ENCODE measurements at regions of chr5 and their contacts with region 1.

Region 1: GRCh38 chr5:150350524-150351344 is 6.8 kb upstream of the TCOF1 start:
- DNase-seq: peak; percentile 66 to 82
- H3K4me3 ChIP-seq: no peak overlapping the region
- H3K27ac ChIP-seq: no peak overlapping the region
- H3K4me1 ChIP-seq: peaks cover 6% of the 10 kb centered on the region
- H3K27me3 ChIP-seq: no peaks in the 10 kb centered on the region
- CTCF ChIP-seq: peak; percentile 90

Region 2: DNA sequence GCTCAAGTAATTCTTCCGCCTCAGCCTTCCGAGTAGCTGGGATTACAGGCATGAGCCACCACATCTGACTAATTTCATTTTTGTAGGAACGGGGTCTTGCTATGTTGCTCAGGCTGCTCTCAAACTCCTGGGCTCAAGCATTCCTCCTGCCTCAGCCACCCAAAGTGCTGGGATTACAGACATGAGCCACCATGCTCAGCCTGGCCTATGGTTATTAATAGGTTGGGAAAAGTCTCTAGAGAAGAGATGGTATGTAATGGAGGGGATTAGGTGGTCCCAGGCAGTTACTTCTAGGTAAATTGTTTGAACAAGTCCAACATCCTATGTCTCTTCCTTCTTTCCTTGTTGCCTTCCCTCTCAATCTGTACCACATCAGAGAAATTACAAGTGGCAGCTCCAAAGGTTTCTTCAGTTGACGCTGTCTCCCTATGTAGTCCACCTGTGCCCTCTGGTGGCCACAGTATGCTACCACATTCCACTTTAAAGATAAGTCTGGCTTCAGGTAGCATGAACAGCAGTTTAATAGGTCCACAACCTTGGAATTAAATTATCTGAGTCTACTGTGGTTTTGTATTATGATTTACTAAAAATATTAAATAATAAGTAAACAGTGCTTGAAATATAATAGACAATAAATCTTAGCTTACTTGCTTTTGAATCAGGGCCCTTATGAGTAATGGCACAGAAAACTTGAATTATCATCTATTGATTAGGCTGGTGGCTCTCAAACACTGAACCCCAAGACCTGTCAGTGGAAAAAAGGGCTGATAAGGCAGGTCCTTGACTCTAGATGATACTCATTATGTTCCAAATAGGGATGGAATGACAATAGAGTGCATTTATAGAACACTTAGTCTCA is 360.0 kb before region 1 on chr5:
- CTCF ChIA-PET with region 1: no interaction called
- POLR2A ChIA-PET with region 1: no interaction called
- intact Hi-C with region 1: loop called (anchors 5 kb)
- DNase-seq: peak; percentile 62 to 70
- H3K4me3 ChIP-seq: no peak overlapping the region
- H3K27ac ChIP-seq: no peak overlapping the region
- H3K4me1 ChIP-seq: peaks cover 15% of the 10 kb centered on the region
- H3K27me3 ChIP-seq: no peaks in the 10 kb centered on the region
- CTCF ChIP-seq: peak; percentile 97

Region 3: GRCh38 chr5:150161242-150162141 is 189.2 kb before region 1 on chr5:
- CTCF ChIA-PET with region 1: no interaction called
- POLR2A ChIA-PET with region 1: no interaction called
- intact Hi-C with region 1: loop called (anchors 1 kb)
- DNase-seq: peak; percentile 51 to 91
- H3K4me3 ChIP-seq: peak overlapping the region; percentile 18; the same call in 1 of the 2 replicates
- H3K27ac ChIP-seq: no peak overlapping the region
- H3K4me1 ChIP-seq: no peaks in the 10 kb centered on the region; the same call in 1 of the 2 replicates
- H3K27me3 ChIP-seq: no peaks in the 10 kb centered on the region
- CTCF ChIP-seq: peak; percentile 96

Region 4: DNA sequence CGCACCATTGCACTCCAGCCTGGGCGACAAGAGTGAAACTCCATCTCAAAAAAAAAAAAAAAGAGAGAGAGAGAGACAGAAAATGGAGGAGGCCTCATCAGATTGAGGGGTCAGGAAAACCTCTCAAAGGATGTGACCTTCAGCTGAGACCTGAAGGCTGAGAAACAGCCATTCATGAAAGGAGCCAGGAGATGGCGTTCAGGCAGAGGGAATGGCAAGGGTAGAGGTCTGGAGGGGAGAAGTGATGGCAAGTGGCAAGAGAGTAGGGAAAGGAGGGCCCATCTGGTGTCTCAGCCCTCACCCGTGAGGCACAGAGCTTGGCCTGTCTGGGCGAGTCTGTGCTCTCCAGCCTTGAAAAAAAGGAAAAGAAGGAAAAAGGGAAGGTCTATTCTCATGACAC is 78.2 kb before region 1 on chr5:
- CTCF ChIA-PET with region 1: interaction called, 5 read pairs
- POLR2A ChIA-PET with region 1: no interaction called
- intact Hi-C with region 1: loop called (anchors 1 kb)
- DNase-seq: peak; percentile 34 to 38
- H3K4me3 ChIP-seq: no peak overlapping the region
- H3K27ac ChIP-seq: no peak overlapping the region
- H3K4me1 ChIP-seq: no peaks in the 10 kb centered on the region
- H3K27me3 ChIP-seq: no peaks in the 10 kb centered on the region
- CTCF ChIP-seq: peak; percentile 46

Region 5: GRCh38 chr5:150320048-150320555 is 30.6 kb before region 1 on chr5:
- CTCF ChIA-PET with region 1: no interaction called
- POLR2A ChIA-PET with region 1: no interaction called
- intact Hi-C with region 1: loop called (anchors 2 kb)
- DNase-seq: peak; percentile 89 to 99
- H3K4me3 ChIP-seq: no peak overlapping the region
- H3K27ac ChIP-seq: peak overlapping the region; percentile 81
- H3K4me1 ChIP-seq: peaks cover 70% of the 10 kb centered on the region
- H3K27me3 ChIP-seq: no peaks in the 10 kb centered on the region
- CTCF ChIP-seq: no peak

Region 6: DNA sequence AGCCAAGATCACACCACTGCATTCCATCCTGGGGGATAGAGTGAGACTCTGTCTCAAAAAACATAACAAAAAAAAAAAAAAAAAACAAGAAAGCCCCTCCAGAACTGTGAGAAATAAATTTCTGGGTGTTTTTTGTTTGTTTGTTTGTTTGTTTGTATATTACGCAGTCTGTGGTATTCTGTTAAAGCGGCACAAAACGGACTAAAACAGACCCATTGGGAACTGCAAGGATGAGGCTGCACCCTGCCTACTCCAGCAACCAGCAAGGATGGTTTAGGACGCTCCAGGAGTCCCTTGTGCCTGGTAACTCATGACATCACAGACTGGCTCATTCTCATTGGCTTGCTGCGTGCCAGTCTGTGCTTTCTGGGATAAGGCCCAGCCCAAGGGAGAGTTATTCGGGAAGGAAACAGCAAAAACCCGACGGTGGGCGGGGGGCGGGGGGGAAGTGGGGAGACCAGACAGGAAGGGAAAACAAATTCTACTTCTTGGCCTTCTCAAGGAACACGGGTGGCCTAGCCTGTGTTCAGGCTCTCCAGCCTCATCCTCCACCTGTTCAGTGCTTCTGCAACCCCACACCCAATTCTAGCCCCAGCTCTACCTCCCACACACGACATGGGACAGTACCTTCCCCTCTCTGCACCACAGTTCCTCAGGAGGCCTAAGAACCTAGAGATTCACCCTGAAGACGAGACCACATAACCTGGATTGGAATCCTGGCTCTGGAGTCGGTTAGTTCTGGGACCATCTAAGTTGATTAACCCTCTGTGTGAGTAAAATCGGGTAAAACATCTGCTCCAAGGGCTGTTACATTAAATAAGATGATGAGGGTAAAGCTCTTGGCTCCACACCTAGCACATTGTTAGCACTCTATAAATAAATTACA is 59.1 kb after region 1 on chr5:
- CTCF ChIA-PET with region 1: no interaction called
- POLR2A ChIA-PET with region 1: no interaction called
- intact Hi-C with region 1: no loop called
- DNase-seq: peak; percentile 75 to 76
- H3K4me3 ChIP-seq: peak overlapping the region; percentile 14; the same call in 1 of the 2 replicates
- H3K27ac ChIP-seq: no peak overlapping the region
- H3K4me1 ChIP-seq: peaks cover 6% of the 10 kb centered on the region
- H3K27me3 ChIP-seq: no peaks in the 10 kb centered on the region
- CTCF ChIP-seq: no peak

Measured in PC-9 (cell line).